PC-3 (cell line): ENCODE measurements at regions of chr17 and their contacts with region 1.

Region 1: DNA sequence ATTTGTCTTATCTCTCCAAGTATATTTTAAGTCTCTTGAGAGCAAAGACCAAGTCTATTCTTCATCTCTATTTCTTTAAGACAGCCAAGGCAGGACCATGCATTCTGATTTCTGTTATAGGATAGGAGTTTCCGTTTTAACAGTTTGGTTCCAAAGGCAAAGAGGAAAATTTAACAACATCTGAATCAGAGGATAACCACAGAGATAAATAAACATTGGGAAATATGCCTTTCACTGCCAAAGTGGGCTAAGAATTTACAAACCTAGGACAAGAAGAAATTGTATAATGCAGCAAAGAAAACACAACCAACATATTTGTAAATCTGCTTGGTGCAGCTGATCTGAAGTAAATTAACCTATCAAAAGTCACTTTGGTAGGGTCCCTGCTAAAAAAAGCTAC is 37.7 kb downstream of the USP32 start:
- DNase-seq: peak; percentile 92
- ATAC-seq: peak; percentile 81
- H3K4me3 ChIP-seq: no peak overlapping the region
- H3K27ac ChIP-seq: peak overlapping the region; percentile 18; the same call in 1 of the 2 replicates
- H3K4me1 ChIP-seq: peaks cover 39% of the 10 kb centered on the region
- H3K27me3 ChIP-seq: no peaks in the 10 kb centered on the region
- CTCF ChIP-seq: no peak

Region 2: GRCh38 chr17:60142872-60143499 is 211.2 kb before region 1 on chr17:
- CTCF ChIA-PET with region 1: no interaction called
- POLR2A ChIA-PET with region 1: no interaction called
- intact Hi-C with region 1: loop called (anchors 10 kb)
- DNase-seq: peak; percentile 96
- ATAC-seq: peak; percentile 89
- H3K4me3 ChIP-seq: peak overlapping the region; percentile 62
- H3K27ac ChIP-seq: no peak overlapping the region
- H3K4me1 ChIP-seq: peaks cover 11% of the 10 kb centered on the region
- H3K27me3 ChIP-seq: peaks cover 4% of the 10 kb centered on the region; the same call in 1 of the 2 replicates
- CTCF ChIP-seq: peak; percentile 96

Region 3: DNA sequence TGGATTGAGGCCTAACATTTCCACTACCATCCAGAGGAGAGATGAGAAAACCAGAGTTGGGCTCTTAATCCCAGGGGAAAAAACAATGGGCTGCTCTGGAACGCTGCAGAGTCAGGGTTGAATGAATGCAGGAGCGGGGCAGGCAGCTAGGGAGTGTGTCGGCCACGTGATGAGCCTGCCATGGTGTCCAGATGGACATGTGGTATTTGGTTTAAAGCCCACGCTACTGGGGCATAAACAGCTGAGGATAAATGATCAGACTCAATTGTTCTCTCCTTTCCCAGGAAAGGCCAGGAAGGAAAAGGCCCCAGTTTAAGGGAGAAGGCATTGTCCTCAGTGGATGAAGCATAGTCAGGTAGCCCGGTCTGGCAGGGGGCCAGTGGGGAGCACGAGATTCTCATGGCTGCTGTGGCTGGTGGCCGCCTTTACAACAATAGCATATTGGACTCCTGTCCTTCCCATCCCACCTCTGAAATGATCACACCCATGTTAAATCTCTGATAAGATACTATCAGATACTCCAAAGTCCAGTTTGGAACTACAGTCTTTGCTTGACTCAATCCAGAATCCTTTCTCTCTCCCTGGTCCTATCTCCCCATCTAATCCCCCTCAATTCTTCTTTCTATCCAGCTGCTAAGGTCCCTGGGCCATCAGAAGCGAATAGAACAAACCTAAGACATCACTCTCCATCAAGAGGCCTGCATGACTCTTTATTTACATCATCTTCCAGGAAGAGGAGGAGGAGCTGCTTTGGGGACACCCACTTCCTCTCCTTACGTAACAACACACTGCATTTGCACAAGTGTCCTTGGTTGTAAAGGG is 184.1 kb before region 1 on chr17:
- CTCF ChIA-PET with region 1: no interaction called
- POLR2A ChIA-PET with region 1: no interaction called
- intact Hi-C with region 1: no loop called
- DNase-seq: no peak
- ATAC-seq: no peak
- H3K4me3 ChIP-seq: no peak overlapping the region
- H3K27ac ChIP-seq: no peak overlapping the region
- H3K4me1 ChIP-seq: peaks cover 12% of the 10 kb centered on the region; the same call in 1 of the 2 replicates
- H3K27me3 ChIP-seq: no peaks in the 10 kb centered on the region
- CTCF ChIP-seq: no peak

Region 4: DNA sequence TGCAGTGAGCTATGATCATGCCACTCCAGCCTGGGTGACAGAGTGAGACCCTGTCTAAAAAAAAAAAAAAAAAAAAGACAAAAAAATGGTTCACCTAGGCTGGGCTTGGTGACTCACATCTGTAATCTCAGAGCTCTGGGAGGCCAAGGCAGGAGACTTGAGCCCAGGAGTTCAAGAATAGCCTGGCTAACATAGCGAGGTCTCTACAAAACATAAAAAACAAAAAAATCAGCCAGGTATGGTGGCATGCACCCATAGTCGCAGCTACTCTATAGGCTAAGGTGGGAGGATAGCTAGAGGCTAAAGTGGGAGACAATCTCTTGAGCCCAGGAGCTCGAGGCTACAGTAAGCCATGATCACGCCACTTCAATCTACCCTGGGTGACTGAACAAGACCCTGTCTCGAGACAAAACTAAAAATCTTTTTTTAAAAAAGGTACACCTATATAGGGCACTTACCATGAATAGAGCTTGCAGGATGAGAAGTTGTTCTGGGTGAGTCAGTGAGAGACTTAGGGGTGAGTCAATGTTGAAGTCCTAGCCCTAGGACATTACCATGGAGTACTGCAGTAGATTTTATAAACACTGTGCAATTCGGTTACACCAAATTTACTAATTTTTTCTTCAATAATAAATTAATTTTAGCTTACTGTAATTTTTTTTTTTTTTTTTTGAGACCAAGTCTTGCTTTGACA is 18.7 kb after region 1 on chr17:
- CTCF ChIA-PET with region 1: no interaction called
- POLR2A ChIA-PET with region 1: no interaction called
- intact Hi-C with region 1: loop called (anchors 1 kb)
- DNase-seq: peak; percentile 88
- ATAC-seq: peak; percentile 99
- H3K4me3 ChIP-seq: peak overlapping the region; percentile 14; the same call in 1 of the 2 replicates
- H3K27ac ChIP-seq: peak overlapping the region; percentile 69
- H3K4me1 ChIP-seq: peaks cover 23% of the 10 kb centered on the region
- H3K27me3 ChIP-seq: no peaks in the 10 kb centered on the region
- CTCF ChIP-seq: no peak

Region 5: GRCh38 chr17:60416368-60416925 is 62.2 kb after region 1 on chr17:
- CTCF ChIA-PET with region 1: no interaction called
- POLR2A ChIA-PET with region 1: no interaction called
- intact Hi-C with region 1: no loop called
- DNase-seq: no peak
- ATAC-seq: no peak
- H3K4me3 ChIP-seq: no peak overlapping the region
- H3K27ac ChIP-seq: no peak overlapping the region
- H3K4me1 ChIP-seq: no peaks in the 10 kb centered on the region
- H3K27me3 ChIP-seq: no peaks in the 10 kb centered on the region
- CTCF ChIP-seq: no peak

Region 6: DNA sequence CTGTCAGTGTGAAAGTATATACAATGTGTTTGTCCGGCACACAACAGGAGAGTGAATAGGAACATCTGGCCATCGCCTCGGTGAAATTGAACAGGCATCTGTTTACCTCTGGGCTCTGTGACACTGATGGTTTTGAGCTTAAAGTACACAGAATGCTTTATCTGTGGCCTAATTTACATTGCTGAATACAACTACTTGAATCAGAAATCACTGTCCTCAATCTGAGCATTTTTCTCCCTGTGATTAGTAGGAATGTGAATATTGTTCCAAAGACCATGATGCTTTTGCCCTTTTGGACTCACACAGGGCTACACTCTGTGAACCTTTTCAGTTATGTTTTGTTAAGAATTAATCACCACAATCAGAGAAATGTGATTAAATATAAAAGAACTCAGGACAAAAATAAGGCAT is 722.4 kb after region 1 on chr17:
- CTCF ChIA-PET with region 1: no interaction called
- POLR2A ChIA-PET with region 1: no interaction called
- intact Hi-C with region 1: no loop called
- DNase-seq: no peak
- ATAC-seq: no peak
- H3K4me3 ChIP-seq: no peak overlapping the region
- H3K27ac ChIP-seq: no peak overlapping the region
- H3K4me1 ChIP-seq: no peaks in the 10 kb centered on the region
- H3K27me3 ChIP-seq: no peaks in the 10 kb centered on the region
- CTCF ChIP-seq: no peak